H1 (cell line): ENCODE measurements at regions of chr12 and their contacts with region 1.

Region 1: GRCh38 chr12:119681961-119682638 is 14.2 kb downstream of the PRKAB1 start:
- DNase-seq: no peak
- H3K4me3 ChIP-seq: no peak overlapping the region
- H3K27ac ChIP-seq: 0 out of 2 replicates have a peak overlapping the region, but pooled peaks have one; percentile 26
- H3K4me1 ChIP-seq: peaks cover 0 to 4% (median 0%) of the 10 kb centered on the region in 4 experiments; a peak in 2 of 7 replicates
- H3K27me3 ChIP-seq: no peaks in the 10 kb centered on the region
- CTCF ChIP-seq: no peak
- EP300 ChIP-seq: no peak
- POLR2A ChIP-seq: no peak
- RAD21 ChIP-seq: no peak

Region 2: GRCh38 chr12:119667577-119668323 is 14.3 kb before region 1 on chr12 and contains the start of gene PRKAB1:
- CTCF ChIA-PET with region 1: interaction called, 14 read pairs
- POLR2A ChIA-PET with region 1: interaction called, 14 read pairs
- DNase-seq: peak; percentile 93 to 97
- H3K4me3 ChIP-seq: peak within 1 kb of the TSS; percentile 89 to 92 (median 91)
- H3K27ac ChIP-seq: peak within 1 kb of the TSS; percentile 84
- H3K4me1 ChIP-seq: peaks cover 0 to 5% (median 1%) of the 10 kb centered on the region in 4 experiments; a peak in 2 of 7 replicates
- H3K27me3 ChIP-seq: no peaks in the 10 kb centered on the region
- CTCF ChIP-seq: peak; percentile 79 to 91 (median 81)
- EP300 ChIP-seq: no peak
- POLR2A ChIP-seq: peak in 1 of 2 experiments; percentile 92; a peak in 2 of 3 replicates
- RAD21 ChIP-seq: peak; percentile 37 to 55; a peak in 3 of 4 replicates
- total RNA-seq, gene PRKAB1: 24.0 and 24.3 TPM in 2 replicates

Region 3: DNA sequence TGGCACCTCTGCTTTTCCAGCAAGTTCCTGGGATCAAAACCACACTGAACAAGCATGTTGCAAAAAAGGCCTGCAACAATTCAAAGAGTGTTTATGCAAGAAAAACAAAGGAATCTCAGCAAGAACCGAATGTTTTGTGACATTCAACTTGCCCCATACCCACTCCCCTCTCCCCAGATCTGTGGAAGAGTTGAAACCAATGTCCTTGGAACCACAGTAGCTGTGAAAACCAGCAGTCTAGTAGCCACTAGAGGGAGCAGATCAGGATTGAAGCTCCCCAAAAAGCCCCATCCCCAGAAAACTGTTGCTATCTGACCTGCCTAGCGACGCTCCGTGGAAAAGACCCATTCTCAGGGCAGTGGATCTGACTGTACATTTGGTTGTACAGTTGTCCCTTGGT is 12.9 kb after region 1 on chr12:
- CTCF ChIA-PET with region 1: interaction called, 10 read pairs
- POLR2A ChIA-PET with region 1: interaction called, 3 read pairs
- DNase-seq: peak in 1 of 2 experiments; percentile 47
- H3K4me3 ChIP-seq: no peak overlapping the region
- H3K27ac ChIP-seq: no peak overlapping the region
- H3K4me1 ChIP-seq: no peaks in the 10 kb centered on the region; a peak in 1 of 7 replicates
- H3K27me3 ChIP-seq: no peaks in the 10 kb centered on the region
- CTCF ChIP-seq: peak; percentile 40 to 82 (median 63)
- EP300 ChIP-seq: no peak
- POLR2A ChIP-seq: no peak
- RAD21 ChIP-seq: peak; percentile 32 to 47